ENCODE measurements at regions of chr4 and their contacts with region 1.

Region 1: DNA sequence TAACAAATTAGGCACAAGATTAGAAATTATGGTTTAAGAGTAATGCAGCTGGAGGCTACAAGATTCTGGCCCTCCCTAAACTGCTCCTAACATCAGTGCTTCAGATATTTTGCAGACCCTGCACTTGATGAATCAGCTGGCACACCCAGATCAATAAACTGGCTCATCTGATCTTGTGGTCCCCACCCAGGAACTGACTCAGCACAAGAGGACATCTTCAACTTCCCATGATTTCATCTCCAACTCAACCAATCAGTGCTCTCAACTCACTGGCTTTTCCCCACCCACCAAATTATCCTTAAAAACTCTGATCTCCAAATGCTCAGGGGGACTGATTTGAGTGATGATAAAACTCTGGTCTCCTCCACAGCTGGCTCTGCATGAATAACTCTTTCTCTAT is 21.7 kb upstream of the TMEM33 start:
- DNase-seq: no peak
- H3K4me3 Mint-ChIP-seq: no peak overlapping the region
- H3K27ac Mint-ChIP-seq: no peak overlapping the region
- H3K4me1 Mint-ChIP-seq: peaks cover 15% of the 10 kb centered on the region
- H3K27me3 Mint-ChIP-seq: no peaks in the 10 kb centered on the region
- CTCF ChIP-seq: no peak

Region 2: DNA sequence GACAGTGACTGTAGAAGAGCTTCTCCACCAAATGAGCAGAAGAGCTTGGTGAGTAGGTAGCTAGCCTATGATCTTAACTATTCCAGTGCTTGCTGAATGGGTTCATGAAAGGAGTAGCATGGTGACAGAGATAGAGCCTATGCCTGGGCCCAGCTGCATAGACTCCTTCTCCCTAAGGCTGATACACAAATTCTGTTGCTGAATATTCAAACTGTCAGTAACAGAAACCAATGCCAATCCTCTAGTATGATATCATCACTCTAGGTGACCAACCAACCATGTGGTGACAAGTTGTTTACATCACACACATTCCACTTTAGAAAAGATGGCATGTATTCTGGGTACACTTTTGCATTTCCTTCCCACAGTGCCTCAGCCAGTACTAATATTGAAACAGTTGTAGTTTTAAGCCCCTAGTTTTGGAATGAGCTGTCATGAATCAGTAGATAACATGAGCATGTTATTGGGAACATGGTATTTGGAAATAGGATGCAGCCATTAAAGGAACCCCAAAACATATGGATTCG is 875.6 kb after region 1 on chr4:
- CTCF ChIA-PET with region 1: interaction called, 10 read pairs
- intact Hi-C with region 1: no loop called
- DNase-seq: no peak
- H3K4me3 Mint-ChIP-seq: no peak overlapping the region
- H3K27ac Mint-ChIP-seq: no peak overlapping the region
- H3K4me1 Mint-ChIP-seq: no peaks in the 10 kb centered on the region
- H3K27me3 Mint-ChIP-seq: no peaks in the 10 kb centered on the region
- CTCF ChIP-seq: no peak

Measured in Calu3 (cell line).